CD4-positive, alpha-beta memory T cell (primary cell): ENCODE measurements at regions of chr1 and their contacts with region 1.

Region 1: DNA sequence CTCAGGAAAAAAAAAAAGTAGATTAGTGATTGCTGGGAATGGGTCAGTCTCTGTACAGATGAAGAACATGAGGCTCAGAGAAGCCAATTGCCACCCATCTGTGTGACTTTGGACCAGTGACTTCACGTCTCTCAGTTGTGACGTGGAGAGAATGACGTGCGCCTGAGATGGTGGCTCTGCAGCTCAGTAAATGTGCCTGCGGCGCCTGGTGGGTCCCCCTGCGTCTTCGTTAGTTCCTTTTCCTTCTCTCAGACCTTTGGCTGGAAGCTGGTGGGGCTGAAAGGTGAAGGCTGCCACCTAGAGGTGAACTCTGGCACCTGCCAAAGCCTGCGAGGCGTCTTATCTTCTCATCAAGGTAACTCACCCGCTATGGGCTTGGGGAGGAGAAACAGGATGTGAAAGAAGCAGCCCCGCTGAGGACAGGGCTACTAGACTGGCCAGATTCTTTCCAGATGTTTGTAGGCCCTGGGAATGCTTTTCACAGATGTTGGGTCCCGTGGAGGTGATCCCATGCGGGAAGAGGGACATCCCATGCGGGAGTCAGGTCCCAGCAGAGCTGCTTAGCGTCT is 8.7 kb upstream of the E2F2 start:
- DNase-seq: peak; percentile 91 to 95 (median 92)
- H3K4me3 ChIP-seq: no peak overlapping the region
- H3K4me3 Mint-ChIP-seq: peak overlapping the region in 7 of 8 donors; percentile 23 to 73 (median 52)
- H3K27ac ChIP-seq: no peak overlapping the region
- H3K27ac Mint-ChIP-seq: peak overlapping the region; percentile 68 to 92 (median 89)
- H3K4me1 ChIP-seq: peaks cover 22% of the 10 kb centered on the region
- H3K4me1 Mint-ChIP-seq: peaks cover 12 to 32% (median 23%) of the 10 kb centered on the region in 4 donors
- H3K27me3 ChIP-seq: no peaks in the 10 kb centered on the region
- H3K27me3 Mint-ChIP-seq: no peaks in the 10 kb centered on the region

Region 2: DNA sequence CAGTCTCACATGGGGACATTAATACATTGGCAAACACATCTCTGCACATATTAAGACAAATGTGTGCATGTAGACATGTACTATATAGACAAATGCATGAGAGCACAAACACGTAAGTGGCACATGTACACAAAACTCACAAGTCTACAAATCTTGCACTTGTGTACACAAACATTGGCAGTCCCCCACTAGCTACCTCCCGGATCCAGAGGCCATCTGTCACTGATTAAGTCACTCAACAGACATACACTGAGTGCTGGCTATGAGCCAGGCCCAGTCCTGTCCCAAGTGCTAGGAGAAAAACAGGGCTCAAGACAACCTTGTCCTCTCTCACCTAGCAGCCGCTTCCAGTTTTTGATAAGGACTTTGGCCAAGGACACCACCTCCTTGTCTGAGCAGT is 122.2 kb before region 1 on chr1:
- CTCF ChIA-PET with region 1: no interaction called
- POLR2A ChIA-PET with region 1: no interaction called
- intact Hi-C with region 1: no loop called
- DNase-seq: no peak
- H3K4me3 ChIP-seq: no peak overlapping the region
- H3K4me3 Mint-ChIP-seq: no peak overlapping the region
- H3K27ac ChIP-seq: no peak overlapping the region
- H3K27ac Mint-ChIP-seq: peak overlapping the region in 1 of 7 donors; percentile 15
- H3K4me1 ChIP-seq: peaks cover 14% of the 10 kb centered on the region
- H3K4me1 Mint-ChIP-seq: peaks cover 9 to 16% (median 14%) of the 10 kb centered on the region in 4 donors
- H3K27me3 ChIP-seq: no peaks in the 10 kb centered on the region
- H3K27me3 Mint-ChIP-seq: no peaks in the 10 kb centered on the region

Region 3: DNA sequence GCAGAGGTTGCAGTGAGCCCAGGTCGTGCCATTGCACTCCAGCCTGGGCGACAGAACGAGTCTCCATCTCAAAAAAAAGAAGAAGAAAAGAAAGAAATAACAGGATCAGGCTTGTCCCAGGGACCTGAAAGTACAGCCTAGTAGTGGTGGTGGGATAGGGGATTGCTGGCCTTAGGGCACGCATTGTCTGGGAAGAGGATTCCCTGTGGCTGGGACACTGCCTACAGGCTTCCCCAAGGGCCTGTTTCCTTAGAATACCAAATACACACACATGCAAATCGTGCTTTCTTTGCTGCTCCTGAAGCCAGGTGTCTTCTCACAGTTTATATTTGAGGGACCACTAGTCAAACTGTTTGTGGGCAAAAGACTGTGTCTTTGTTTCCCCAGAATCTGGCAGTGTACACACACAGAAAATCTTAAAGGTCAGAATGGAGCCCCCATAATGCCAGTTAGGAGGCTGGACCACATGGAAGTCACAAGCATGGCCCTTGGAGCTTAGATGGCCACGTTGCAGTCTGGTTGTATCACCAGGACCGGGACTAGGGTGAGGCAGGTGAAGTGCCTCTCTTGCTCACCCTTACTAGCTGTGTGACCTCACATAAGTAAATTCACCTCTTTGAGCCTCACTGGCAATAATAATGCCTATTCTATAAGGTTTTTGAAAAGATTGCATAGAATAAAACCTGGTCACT is 43.1 kb before region 1 on chr1:
- CTCF ChIA-PET with region 1: interaction called, 924 read pairs
- POLR2A ChIA-PET with region 1: interaction called, 135 read pairs
- intact Hi-C with region 1: loop called (anchors 1 kb)
- DNase-seq: no peak
- H3K4me3 ChIP-seq: no peak overlapping the region
- H3K4me3 Mint-ChIP-seq: no peak overlapping the region
- H3K27ac ChIP-seq: no peak overlapping the region
- H3K27ac Mint-ChIP-seq: no peak overlapping the region
- H3K4me1 ChIP-seq: peaks cover 4% of the 10 kb centered on the region
- H3K4me1 Mint-ChIP-seq: peaks cover 0 to 9% (median 5%) of the 10 kb centered on the region in 4 donors
- H3K27me3 ChIP-seq: no peaks in the 10 kb centered on the region
- H3K27me3 Mint-ChIP-seq: no peaks in the 10 kb centered on the region

Region 4: DNA sequence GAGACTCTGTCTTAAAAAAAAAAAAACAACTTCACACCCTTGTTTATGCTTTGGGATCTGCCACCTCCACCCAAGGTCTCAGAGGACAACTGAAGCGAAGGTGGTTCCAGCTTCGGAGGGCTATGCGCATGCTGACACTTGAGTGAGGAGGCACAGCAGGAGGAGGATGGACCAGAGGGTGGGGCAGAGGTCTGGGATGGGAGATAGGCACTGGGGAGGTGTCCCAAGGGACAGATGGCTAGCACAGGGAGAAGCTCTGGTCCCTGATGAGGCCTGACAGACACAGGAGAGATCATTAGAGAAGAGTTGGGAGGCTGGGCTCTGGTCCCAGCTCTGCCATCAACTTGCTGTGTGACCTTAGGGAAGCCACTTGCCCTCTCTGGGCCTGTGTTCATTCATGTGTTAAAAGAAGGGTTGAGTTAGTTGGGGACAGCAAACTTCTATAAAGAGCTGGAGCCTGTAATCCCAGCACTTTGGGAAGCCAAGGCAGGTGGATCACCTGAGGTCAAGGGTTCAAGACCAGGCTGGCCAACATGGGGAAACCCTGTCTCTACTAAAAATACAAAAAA is 25.6 kb before region 1 on chr1:
- CTCF ChIA-PET with region 1: interaction called, 20 read pairs
- POLR2A ChIA-PET with region 1: interaction called, 4 read pairs
- intact Hi-C with region 1: no loop called
- DNase-seq: no peak
- H3K4me3 ChIP-seq: no peak overlapping the region
- H3K4me3 Mint-ChIP-seq: no peak overlapping the region
- H3K27ac ChIP-seq: no peak overlapping the region
- H3K27ac Mint-ChIP-seq: peak overlapping the region in 3 of 7 donors; percentile 31 to 76 (median 46)
- H3K4me1 ChIP-seq: no peaks in the 10 kb centered on the region
- H3K4me1 Mint-ChIP-seq: peaks cover 0 to 5% (median 2%) of the 10 kb centered on the region in 4 donors
- H3K27me3 ChIP-seq: no peaks in the 10 kb centered on the region
- H3K27me3 Mint-ChIP-seq: no peaks in the 10 kb centered on the region

Region 5: GRCh38 chr1:23619299-23620188 is 79.8 kb after region 1 on chr1:
- CTCF ChIA-PET with region 1: interaction called, 27 read pairs
- POLR2A ChIA-PET with region 1: interaction called, 616 read pairs
- intact Hi-C with region 1: no loop called
- DNase-seq: peak; percentile 87 to 94 (median 90)
- H3K4me3 ChIP-seq: peak overlapping the region; percentile 47 to 58
- H3K4me3 Mint-ChIP-seq: peak overlapping the region; percentile 81 to 88 (median 84)
- H3K27ac ChIP-seq: peak overlapping the region; percentile 65
- H3K27ac Mint-ChIP-seq: peak overlapping the region; percentile 92 to 98 (median 95)
- H3K4me1 ChIP-seq: peaks cover 88% of the 10 kb centered on the region
- H3K4me1 Mint-ChIP-seq: peaks cover 62 to 95% (median 77%) of the 10 kb centered on the region in 4 donors
- H3K27me3 ChIP-seq: no peaks in the 10 kb centered on the region
- H3K27me3 Mint-ChIP-seq: no peaks in the 10 kb centered on the region